ENCODE measurements at regions of chr5 and their contacts with region 1.

Region 1: GRCh38 chr5:74576941-74577456 is 63.5 kb downstream of the ENC1 start:
- DNase-seq: peak; percentile 44
- H3K4me3 ChIP-seq: no peak overlapping the region
- H3K27ac ChIP-seq: peak overlapping the region; percentile 27
- H3K4me1 ChIP-seq: peaks cover 35% of the 10 kb centered on the region
- H3K27me3 ChIP-seq: no peaks in the 10 kb centered on the region
- CTCF ChIP-seq: no peak

Region 2: GRCh38 chr5:74530326-74531050 is 46.5 kb before region 1 on chr5:
- CTCF ChIA-PET with region 1: no interaction called
- dilution Hi-C with region 1: no loop called
- in situ Hi-C with region 1: no loop called
- intact Hi-C with region 1: no loop called
- DNase-seq: no peak
- H3K4me3 ChIP-seq: no peak overlapping the region
- H3K27ac ChIP-seq: no peak overlapping the region
- H3K4me1 ChIP-seq: no peaks in the 10 kb centered on the region
- H3K27me3 ChIP-seq: no peaks in the 10 kb centered on the region
- CTCF ChIP-seq: no peak

Region 3: DNA sequence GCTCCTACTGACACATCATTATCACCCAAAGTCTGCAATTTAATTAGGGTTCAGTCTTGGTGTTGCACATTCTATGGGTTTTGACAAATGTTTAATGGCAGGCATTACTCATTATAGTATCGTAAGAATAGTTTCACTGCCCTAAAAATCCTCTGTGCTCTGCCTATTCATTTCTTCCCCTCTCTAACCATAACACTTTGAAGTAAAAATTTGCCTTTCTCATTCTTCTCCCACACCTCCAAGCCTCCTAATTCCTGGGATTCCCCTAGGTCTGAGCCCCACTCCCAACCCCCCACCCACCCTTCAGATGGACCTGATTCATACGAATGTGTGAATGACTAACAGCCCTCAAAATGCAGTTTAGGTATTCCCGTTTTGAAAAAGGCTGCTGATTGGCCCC is 45.1 kb after region 1 on chr5:
- CTCF ChIA-PET with region 1: no interaction called
- dilution Hi-C with region 1: no loop called
- in situ Hi-C with region 1: no loop called
- intact Hi-C with region 1: loop called (anchors 5 kb)
- DNase-seq: peak; percentile 70
- H3K4me3 ChIP-seq: no peak overlapping the region
- H3K27ac ChIP-seq: no peak overlapping the region
- H3K4me1 ChIP-seq: peaks cover 38% of the 10 kb centered on the region
- H3K27me3 ChIP-seq: no peaks in the 10 kb centered on the region
- CTCF ChIP-seq: no peak